Aorta (tissue), 5 donors: ENCODE measurements at regions of chr11 and their contacts with region 1.

Region 1: DNA sequence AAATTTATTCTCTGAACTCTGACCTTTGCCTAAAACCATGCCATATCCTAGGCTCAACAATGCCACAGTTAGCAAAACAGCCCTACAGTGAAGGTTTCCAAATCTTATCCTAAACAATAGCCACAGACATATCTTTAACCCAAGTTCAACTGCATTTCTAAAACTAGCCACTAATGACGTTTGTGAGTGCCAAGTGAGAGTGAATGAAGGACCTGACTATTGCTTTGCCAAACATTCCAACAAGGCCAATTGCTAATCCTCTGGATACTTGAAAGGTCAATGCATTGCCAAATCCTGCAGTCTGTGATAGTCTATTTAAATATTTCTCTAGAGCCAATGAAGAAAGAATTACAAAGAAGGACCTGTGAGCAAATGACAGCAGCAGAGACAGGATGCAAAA is 2.5 kb upstream of the OR4C45 start:
- DNase-seq: no peak
- ATAC-seq: no peak
- H3K4me3 ChIP-seq: no peak overlapping the region
- H3K27ac ChIP-seq: no peak overlapping the region
- H3K4me1 ChIP-seq: no peaks in the 10 kb centered on the region
- H3K27me3 ChIP-seq: no peaks in the 10 kb centered on the region

Region 2: DNA sequence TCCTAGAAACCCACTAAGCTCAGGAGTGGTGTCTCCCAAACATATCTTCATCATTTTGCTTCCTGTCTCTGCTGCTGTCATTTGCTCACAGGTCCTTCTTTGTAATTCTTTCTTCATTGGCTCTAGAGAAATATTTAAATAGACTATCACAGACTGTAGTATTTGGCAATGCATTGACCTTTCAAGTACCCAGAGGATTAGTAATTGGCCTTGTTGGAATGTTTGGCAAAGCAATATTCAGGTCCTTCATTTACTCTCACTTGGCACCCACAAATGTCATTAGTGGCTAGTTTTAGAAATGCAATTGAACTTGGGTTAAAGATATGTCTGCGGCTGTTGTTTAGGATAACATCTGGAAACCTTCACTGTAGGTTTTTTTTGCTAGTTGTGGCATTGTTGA is 1675.5 kb before region 1 on chr11:
- intact Hi-C with region 1: loop called in 1 of 2 experiments (anchors 5 kb)
- DNase-seq: no peak
- ATAC-seq: no peak
- H3K4me3 ChIP-seq: no peak overlapping the region
- H3K27ac ChIP-seq: no peak overlapping the region
- H3K4me1 ChIP-seq: no peaks in the 10 kb centered on the region
- H3K27me3 ChIP-seq: no peaks in the 10 kb centered on the region

Region 3: GRCh38 chr11:49952091-49952490 is 78.1 kb before region 1 on chr11 and contains the start of gene OR4C13:
- intact Hi-C with region 1: loop called in 1 of 2 experiments (anchors 10 kb)
- DNase-seq: no peak
- ATAC-seq: no peak
- H3K4me3 ChIP-seq: no peak within 1 kb of the TSS
- H3K27ac ChIP-seq: no peak within 1 kb of the TSS
- H3K4me1 ChIP-seq: no peaks in the 10 kb centered on the region
- H3K27me3 ChIP-seq: no peaks in the 10 kb centered on the region
- total RNA-seq, gene OR4C13: not detected

Region 4: GRCh38 chr11:50075856-50076255 is 45.7 kb after region 1 on chr11:
- intact Hi-C with region 1: no loop called
- DNase-seq: no peak
- ATAC-seq: no peak
- H3K4me3 ChIP-seq: no peak overlapping the region
- H3K27ac ChIP-seq: no peak overlapping the region
- H3K4me1 ChIP-seq: no peaks in the 10 kb centered on the region
- H3K27me3 ChIP-seq: no peaks in the 10 kb centered on the region